Activated CD4-positive, alpha-beta T cell treated with anti-CD3 and anti-CD28 coated beads for 36 hours (primary cell): ENCODE measurements at regions of chr22 and their contacts with region 1.

Region 1: DNA sequence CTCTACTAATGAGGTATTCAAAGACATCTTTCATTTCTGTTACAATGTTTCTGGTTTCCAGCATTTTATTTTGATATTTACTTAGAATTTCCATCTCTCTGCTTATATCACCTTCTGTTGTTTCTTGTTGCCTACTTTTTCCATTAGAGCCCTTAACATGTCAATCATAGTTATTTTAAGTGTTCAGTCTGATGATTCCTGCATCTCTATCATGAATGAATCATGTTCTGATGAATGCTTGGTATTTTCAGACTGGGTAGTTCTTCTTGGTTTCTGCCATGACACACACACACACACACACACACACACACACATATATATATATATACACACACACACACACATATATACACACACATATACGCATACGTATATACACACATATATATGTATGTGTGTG is 486.4 kb upstream of the ISX start:
- DNase-seq: no peak
- ATAC-seq: no peak
- H3K4me3 Mint-ChIP-seq: no peak overlapping the region
- H3K27ac Mint-ChIP-seq: no peak overlapping the region
- H3K4me1 Mint-ChIP-seq: no peaks in the 10 kb centered on the region
- H3K27me3 Mint-ChIP-seq: no peaks in the 10 kb centered on the region

Region 2: DNA sequence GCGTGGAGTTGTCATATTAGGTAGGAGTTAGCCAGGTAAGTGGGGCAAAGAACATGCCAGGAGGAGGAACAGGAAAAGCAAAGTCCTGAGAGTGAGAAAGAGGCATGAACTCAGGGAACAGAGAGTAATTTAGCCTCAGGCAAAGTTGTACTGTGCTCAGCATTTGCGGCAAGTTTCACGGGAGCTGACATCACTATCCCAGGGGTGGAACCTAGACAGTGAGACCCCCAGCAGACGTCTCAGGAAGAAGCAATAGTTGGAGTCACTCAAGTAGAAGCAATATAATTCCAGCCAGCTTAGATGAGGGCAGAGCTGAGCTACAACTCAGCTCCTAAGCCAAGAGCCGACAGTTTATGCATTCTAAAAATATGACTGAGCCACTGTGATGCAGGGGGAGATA is 60.4 kb after region 1 on chr22:
- CTCF ChIA-PET with region 1: no interaction called
- POLR2A ChIA-PET with region 1: no interaction called
- intact Hi-C with region 1: loop called in 1 of 2 experiments (anchors 10 kb)
- DNase-seq: no peak
- ATAC-seq: no peak
- H3K4me3 Mint-ChIP-seq: no peak overlapping the region
- H3K27ac Mint-ChIP-seq: no peak overlapping the region
- H3K4me1 Mint-ChIP-seq: no peaks in the 10 kb centered on the region
- H3K27me3 Mint-ChIP-seq: peaks cover 2% of the 10 kb centered on the region